ENCODE measurements at regions of chr1 and their contacts with region 1.

Region 1: GRCh38 chr1:228457396-228458176 is 29.6 kb upstream of the RNF187 start:
- DNase-seq: peak; percentile 100
- H3K4me3 Mint-ChIP-seq: peak overlapping the region; percentile 97
- H3K27ac Mint-ChIP-seq: peak overlapping the region; percentile 98
- H3K4me1 Mint-ChIP-seq: peaks cover 35% of the 10 kb centered on the region
- H3K27me3 Mint-ChIP-seq: no peaks in the 10 kb centered on the region
- CTCF ChIP-seq: peak; percentile 52

Region 2: DNA sequence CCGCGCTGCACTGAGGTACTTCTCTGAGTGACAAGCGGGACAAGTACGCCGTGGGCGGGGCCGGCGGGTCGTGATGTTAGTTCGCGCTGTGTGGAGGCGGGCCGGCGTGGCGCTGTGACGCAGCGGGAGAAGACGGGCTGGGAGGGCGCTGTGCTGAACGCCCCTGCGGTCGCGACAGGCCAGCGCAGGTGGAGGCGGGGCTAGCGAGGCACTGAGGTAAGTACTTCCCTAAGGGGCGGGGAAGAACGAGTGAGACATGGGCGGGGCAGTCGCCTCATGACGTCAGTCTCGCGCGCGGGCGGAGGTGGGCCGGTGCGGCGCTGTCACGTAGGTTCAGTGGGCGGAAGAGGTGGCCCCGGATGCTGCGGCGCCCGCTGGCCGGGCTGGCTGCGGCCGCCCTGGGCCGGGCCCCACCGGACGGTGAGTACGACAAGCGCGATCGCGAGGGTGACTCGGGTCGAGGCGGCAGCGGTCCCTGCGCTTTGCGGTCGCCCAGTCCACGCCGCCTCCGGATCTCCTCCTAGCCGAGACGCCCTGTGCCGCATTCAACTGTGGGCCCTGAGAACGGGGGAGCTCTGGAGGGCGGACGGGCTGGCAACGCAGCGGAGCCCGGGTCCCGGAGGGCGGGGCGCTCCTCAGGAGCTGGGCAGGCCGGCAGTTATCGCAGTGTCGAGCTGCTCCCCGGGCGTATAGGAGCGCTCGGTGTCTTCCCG is 317.5 kb before region 1 on chr1 and contains the start of gene GUK1:
- CTCF ChIA-PET with region 1: interaction called, 4 read pairs
- POLR2A ChIA-PET with region 1: interaction called, 18 read pairs
- intact Hi-C with region 1: no loop called
- DNase-seq: peak; percentile 100
- H3K4me3 Mint-ChIP-seq: peak within 1 kb of the TSS; percentile 99
- H3K27ac Mint-ChIP-seq: peak within 1 kb of the TSS; percentile 95
- H3K4me1 Mint-ChIP-seq: peaks cover 25% of the 10 kb centered on the region
- H3K27me3 Mint-ChIP-seq: peaks cover 29% of the 10 kb centered on the region
- CTCF ChIP-seq: peak; percentile 32
- total RNA-seq, gene GUK1: 495 and 510 TPM in 2 replicates

Region 3: GRCh38 chr1:228226956-228227791 is 230.4 kb before region 1 on chr1:
- CTCF ChIA-PET with region 1: interaction called, 4 read pairs
- POLR2A ChIA-PET with region 1: interaction called, 23 read pairs
- intact Hi-C with region 1: loop called (anchors 2 kb)
- DNase-seq: peak; percentile 42
- H3K4me3 Mint-ChIP-seq: no peak overlapping the region
- H3K27ac Mint-ChIP-seq: peak overlapping the region; percentile 93
- H3K4me1 Mint-ChIP-seq: peaks cover 15% of the 10 kb centered on the region
- H3K27me3 Mint-ChIP-seq: no peaks in the 10 kb centered on the region
- CTCF ChIP-seq: peak; percentile 31

Region 4: DNA sequence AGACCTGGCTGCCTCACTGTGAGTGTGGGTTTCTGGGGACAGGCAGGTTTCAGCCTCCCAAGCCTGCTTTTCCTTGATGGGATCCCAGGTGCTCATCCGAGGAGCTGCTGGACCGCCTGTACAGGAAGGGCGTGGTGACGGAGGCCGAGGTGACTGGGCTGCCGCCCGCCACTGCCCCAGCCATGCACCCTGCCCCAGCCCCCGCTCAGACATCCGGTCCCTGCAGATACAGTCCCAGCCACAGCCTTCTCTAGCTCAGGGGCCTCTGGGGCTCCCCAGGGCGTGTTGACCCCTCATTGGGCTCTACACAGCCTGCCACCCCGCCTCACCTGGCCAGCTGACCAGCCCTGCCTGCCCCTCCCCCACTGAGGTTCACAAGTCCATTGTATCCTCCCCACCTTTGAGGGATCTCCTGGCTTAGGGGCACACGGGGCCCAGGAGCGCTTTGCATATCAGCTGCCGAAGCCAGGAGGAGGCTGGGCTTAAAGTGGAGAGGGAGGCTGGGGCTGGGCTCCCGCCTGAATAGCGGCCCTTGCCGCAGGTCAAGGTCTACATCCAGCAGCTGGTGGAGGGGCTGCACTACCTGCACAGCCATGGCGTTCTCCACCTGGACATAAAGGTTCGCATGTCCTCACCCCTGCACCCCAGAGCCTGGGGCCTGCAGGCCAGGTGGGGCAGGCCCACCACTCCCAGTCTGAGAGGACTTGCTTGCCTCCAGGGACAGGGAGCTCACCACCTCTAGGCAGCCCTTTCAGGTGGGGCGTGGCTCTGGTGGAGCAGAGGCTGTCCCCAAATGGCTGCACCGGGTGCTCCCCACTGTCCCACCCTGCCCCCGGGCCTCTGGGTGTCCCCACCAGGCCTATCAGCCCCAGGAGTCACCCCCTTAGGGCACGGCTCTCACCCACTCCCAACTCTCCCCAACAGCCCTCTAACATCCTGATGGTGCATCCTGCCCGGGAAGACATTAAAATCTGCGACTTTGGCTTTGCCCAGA is 89.5 kb before region 1 on chr1:
- CTCF ChIA-PET with region 1: no interaction called
- POLR2A ChIA-PET with region 1: no interaction called
- intact Hi-C with region 1: no loop called
- DNase-seq: no peak
- H3K4me3 Mint-ChIP-seq: no peak overlapping the region
- H3K27ac Mint-ChIP-seq: no peak overlapping the region
- H3K4me1 Mint-ChIP-seq: no peaks in the 10 kb centered on the region
- H3K27me3 Mint-ChIP-seq: no peaks in the 10 kb centered on the region
- CTCF ChIP-seq: no peak

Region 5: DNA sequence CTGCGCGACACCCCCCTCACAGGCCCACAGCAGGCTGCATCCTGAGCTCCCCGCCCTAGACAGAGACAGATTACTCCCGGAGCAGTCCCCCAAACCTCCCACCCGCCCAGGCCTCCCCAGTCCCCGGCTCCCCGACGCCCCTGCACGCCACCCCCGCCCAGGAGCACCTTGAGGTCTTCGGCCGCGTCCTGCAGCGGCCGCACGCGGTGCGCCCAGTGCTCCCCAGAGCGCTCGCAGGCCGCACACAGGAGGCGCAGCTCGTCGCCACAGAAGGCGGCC is 51.7 kb before region 1 on chr1:
- CTCF ChIA-PET with region 1: interaction called, 30 read pairs
- POLR2A ChIA-PET with region 1: interaction called, 117 read pairs
- intact Hi-C with region 1: loop called (anchors 1 kb)
- DNase-seq: peak; percentile 40
- H3K4me3 Mint-ChIP-seq: peak overlapping the region; percentile 95
- H3K27ac Mint-ChIP-seq: peak overlapping the region; percentile 93
- H3K4me1 Mint-ChIP-seq: peaks cover 55% of the 10 kb centered on the region
- H3K27me3 Mint-ChIP-seq: no peaks in the 10 kb centered on the region
- CTCF ChIP-seq: no peak

Region 6: DNA sequence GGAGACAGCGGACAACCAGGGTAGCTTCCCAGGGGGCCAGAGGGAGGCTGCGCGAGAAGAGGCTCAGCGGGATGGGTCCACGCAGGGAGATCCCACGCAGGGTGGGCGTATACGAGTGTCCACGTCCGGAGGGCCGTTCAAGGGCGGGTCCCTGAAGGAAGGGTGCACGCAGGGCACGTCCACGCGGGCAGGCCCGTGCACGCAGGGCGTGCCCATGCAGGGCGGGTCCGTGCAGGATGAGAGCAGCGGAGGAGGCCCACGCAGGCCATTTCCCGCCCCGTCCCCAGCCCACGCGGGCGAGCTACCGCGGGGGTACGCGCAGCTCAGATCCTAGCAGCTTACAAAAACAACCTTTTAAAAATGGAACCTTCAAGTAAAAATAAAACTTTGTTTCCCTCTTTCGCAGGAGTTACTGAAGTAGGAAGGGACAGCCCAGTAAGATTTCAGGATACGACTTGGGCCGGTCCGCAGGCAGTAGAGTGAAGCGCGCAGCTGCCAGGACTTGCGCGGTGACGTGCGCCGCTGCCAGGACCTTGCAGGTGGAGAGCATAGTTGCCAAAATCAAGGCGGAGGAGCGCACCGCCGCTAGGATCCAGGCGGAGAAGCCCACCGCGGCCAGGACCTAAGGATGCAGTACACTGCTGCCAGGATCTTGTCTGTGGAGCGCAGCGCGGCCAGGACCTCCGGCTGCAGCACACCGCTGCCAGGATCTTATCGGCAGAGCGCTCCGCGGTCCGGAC is 29.2 kb after region 1 on chr1:
- CTCF ChIA-PET with region 1: interaction called, 10 read pairs
- POLR2A ChIA-PET with region 1: interaction called, 182 read pairs
- intact Hi-C with region 1: loop called (anchors 1 kb)
- DNase-seq: peak; percentile 93
- H3K4me3 Mint-ChIP-seq: peak overlapping the region; percentile 90
- H3K27ac Mint-ChIP-seq: peak overlapping the region; percentile 100
- H3K4me1 Mint-ChIP-seq: peaks cover 40% of the 10 kb centered on the region
- H3K27me3 Mint-ChIP-seq: peaks cover 14% of the 10 kb centered on the region
- CTCF ChIP-seq: no peak

Measured in MCF 10A (cell line).